Mucosa of descending colon (tissue), 3 donors: ENCODE measurements at regions of chr3 and their contacts with region 1.

Region 1: GRCh38 chr3:159616212-159616825 is 372.3 kb upstream of the IL12A start:
- DNase-seq: peak in 2 of 3 donors; percentile 74
- ATAC-seq: peak; percentile 75
- H3K4me3 ChIP-seq: no peak overlapping the region
- H3K4me1 ChIP-seq: peaks cover 4% of the 10 kb centered on the region
- CTCF ChIP-seq: peak; percentile 23

Region 2: DNA sequence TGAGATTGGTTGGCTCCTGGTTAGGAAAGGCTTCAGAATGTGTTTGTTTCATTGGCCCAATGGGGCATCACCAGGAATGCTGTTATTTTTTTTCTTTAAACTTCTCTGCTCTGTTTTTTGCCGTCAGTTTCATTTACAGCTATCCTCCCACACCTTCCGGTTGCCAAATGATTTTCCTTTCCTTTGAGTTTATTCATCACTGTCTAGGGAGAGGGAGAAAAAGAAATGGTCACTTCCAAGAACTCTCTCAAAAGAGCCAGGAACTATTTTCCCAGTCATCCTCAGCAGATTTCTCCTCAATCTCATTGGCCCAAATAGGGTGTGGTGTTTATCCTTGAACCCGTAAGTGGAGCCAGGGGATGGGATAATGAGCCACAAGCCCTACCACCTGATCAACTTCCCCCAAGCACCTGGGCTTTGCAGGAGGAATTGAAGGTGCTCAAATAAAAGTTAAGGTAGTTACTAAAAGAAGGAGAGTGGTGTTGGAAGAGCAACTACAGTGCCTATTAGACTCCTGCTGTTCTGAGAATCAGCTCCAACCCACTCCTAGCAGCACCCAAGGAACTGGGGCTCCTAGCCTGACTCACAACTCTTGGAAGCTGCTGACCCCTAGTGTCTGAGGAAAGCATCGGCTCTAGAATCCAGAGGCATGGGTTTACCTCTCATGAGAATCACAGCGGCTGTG is 188.5 kb after region 1 on chr3:
- intact Hi-C with region 1: loop called (anchors 2 to 10 kb)
- DNase-seq: peak in 2 of 3 donors; percentile 47 to 79
- ATAC-seq: peak; percentile 97
- H3K4me3 ChIP-seq: no peak overlapping the region
- H3K4me1 ChIP-seq: no peaks in the 10 kb centered on the region
- CTCF ChIP-seq: peak; percentile 65

Region 3: GRCh38 chr3:160012108-160012507 is 395.8 kb after region 1 on chr3:
- intact Hi-C with region 1: loop called in 1 of 2 experiments (anchors 10 kb)
- DNase-seq: no peak
- ATAC-seq: peak; percentile 66
- H3K4me3 ChIP-seq: no peak overlapping the region
- H3K4me1 ChIP-seq: no peaks in the 10 kb centered on the region
- CTCF ChIP-seq: no peak